ENCODE measurements at regions of chr15 and their contacts with region 1.

Region 1: GRCh38 chr15:80512726-80513660 is 108.8 kb downstream of the ARNT2 start:
- DNase-seq: peak; percentile 12
- H3K4me3 ChIP-seq: no peak overlapping the region
- H3K27ac ChIP-seq: no peak overlapping the region
- H3K4me1 ChIP-seq: peaks cover 3% of the 10 kb centered on the region
- H3K27me3 ChIP-seq: no peaks in the 10 kb centered on the region
- CTCF ChIP-seq: peak; percentile 17 to 48

Region 2: GRCh38 chr15:80242132-80242769 is 270.7 kb before region 1 on chr15:
- CTCF ChIA-PET with region 1: no interaction called
- dilution Hi-C with region 1: no loop called
- in situ Hi-C with region 1: no loop called
- intact Hi-C with region 1: loop called (anchors 10 kb)
- DNase-seq: peak; percentile 3
- H3K4me3 ChIP-seq: no peak overlapping the region
- H3K27ac ChIP-seq: no peak overlapping the region
- H3K4me1 ChIP-seq: no peaks in the 10 kb centered on the region
- H3K27me3 ChIP-seq: no peaks in the 10 kb centered on the region
- CTCF ChIP-seq: peak; percentile 58 to 70

Region 3: DNA sequence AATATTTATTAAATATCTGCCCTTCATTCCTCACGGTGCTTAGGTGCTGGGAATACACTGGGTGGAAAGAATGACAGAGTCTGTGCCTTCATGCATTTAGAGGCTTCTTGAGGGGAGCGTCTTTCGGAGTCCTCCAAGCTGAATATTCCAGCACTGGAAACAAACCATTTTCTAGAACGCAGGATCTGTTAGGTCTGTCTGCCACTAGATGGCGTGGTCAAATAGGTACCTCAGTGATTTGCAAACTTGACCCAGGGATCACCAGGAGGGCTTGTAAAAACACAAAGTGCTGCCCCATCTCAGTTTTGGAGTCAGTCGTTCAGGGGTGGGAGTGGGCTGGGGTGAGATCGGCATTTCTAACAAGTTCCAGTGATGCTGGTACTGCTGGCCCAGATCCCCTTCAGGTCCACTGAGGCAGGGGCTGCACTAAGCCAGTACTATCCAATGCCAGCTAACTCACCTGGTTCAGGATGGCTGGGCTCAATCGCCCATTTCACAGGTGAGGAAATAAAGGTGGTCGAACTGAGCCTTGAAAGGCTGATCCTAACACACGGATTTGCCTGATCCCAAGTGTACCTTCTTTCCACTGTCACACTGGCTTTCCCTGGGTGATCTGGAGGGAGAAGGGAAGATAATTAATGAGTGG is 94.0 kb before region 1 on chr15:
- CTCF ChIA-PET with region 1: no interaction called
- dilution Hi-C with region 1: no loop called
- in situ Hi-C with region 1: no loop called
- intact Hi-C with region 1: loop called (anchors 1 kb)
- DNase-seq: peak; percentile 33
- H3K4me3 ChIP-seq: no peak overlapping the region
- H3K27ac ChIP-seq: no peak overlapping the region
- H3K4me1 ChIP-seq: peaks cover 1% of the 10 kb centered on the region
- H3K27me3 ChIP-seq: no peaks in the 10 kb centered on the region
- CTCF ChIP-seq: peak; percentile 66 to 79

Region 4: GRCh38 chr15:80526556-80527340 is 13.8 kb after region 1 on chr15:
- CTCF ChIA-PET with region 1: no interaction called
- dilution Hi-C with region 1: no loop called
- in situ Hi-C with region 1: no loop called
- intact Hi-C with region 1: no loop called
- DNase-seq: no peak
- H3K4me3 ChIP-seq: no peak overlapping the region
- H3K27ac ChIP-seq: no peak overlapping the region
- H3K4me1 ChIP-seq: no peaks in the 10 kb centered on the region
- H3K27me3 ChIP-seq: no peaks in the 10 kb centered on the region
- CTCF ChIP-seq: no peak

Measured in mammary epithelial cell (primary cell).